Mucosa of descending colon (tissue), 3 donors: ENCODE measurements at regions of chr13 and their contacts with region 1.

Region 1: DNA sequence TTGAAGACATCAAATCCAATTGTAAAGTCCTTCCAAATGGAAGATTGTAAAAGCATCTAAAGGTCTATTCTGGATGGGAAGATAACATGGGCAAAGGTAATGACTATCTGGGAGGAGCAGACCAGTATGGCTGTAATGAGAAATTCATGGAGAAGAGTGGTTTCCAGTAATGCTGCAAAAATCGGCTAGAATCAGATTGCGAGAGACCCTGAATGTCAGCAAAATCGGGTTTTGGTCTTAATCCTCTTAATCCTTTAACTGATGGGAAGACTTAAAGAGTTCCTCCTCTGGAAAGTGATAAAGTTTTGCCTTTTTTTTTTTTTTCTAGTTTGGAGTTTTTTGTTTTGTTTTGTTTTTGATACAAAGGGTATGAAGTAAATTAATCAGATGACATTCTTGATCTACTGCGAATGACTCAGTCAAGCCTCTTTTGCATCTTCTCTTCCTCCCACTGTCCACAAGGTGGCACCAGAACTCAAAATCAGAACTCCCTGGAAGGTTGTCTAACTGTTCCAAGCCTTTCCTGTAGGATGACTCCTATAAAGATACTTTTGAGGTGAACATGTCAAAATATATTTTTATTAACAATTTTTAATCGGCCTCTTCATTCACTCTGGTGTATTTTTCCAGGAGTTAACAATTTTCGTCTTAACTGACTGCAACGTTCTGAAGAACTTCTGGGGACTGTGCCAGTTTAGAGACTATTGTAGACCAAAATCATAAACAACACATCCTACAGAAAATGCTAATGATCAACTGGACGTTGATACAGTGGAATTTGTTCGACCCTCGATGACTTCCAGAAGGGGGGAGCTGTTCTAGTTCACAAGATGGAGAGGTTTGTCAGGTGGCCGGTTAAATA is 213.3 kb upstream of the MIR17HG start:
- DNase-seq: peak in 1 of 3 donors; percentile 57
- ATAC-seq: peak; percentile 75
- H3K4me3 ChIP-seq: no peak overlapping the region
- H3K4me1 ChIP-seq: no peaks in the 10 kb centered on the region
- CTCF ChIP-seq: peak; percentile 31

Region 2: DNA sequence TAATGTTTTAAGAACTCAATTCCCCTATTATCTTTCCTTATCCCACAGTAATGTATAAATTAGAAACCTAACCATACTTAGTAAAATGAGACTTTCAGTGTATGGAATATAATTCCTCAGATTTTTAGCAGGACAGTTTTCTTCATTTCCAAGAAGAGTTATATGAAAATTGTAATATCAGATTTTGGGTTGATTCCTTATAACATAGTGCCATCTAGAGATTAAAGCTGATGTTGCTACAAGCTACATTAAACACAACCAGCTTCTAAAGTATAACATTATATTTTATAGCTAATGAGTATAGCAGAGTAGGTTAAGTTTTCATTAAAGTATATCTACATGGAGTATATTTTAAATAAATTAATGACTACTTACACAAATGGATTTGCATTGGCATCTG is 113.6 kb after region 1 on chr13:
- intact Hi-C with region 1: loop called in 1 of 2 experiments (anchors 10 kb)
- DNase-seq: no peak
- ATAC-seq: no peak
- H3K4me3 ChIP-seq: no peak overlapping the region
- H3K4me1 ChIP-seq: no peaks in the 10 kb centered on the region
- CTCF ChIP-seq: no peak